ENCODE measurements at regions of chr2 and their contacts with region 1.

Region 1: GRCh38 chr2:233026192-233026813 is 6.2 kb upstream of the NEU2 start:
- DNase-seq: no peak
- ATAC-seq: peak; percentile 28; the same call in 1 of the 2 replicates
- H3K4me3 ChIP-seq: no peak overlapping the region
- H3K27ac ChIP-seq: no peak overlapping the region
- H3K4me1 ChIP-seq: peaks cover 10 to 40% of the 10 kb centered on the region in 2 experiments; a peak in 3 of 4 replicates
- H3K27me3 ChIP-seq: no peaks in the 10 kb centered on the region
- CTCF ChIP-seq: 0 out of 6 replicates have a peak, but pooled peaks of 1 of the 3 experiments have one; percentile 2
- POLR2A ChIP-seq: no peak
- RAD21 ChIP-seq: no peak

Region 2: DNA sequence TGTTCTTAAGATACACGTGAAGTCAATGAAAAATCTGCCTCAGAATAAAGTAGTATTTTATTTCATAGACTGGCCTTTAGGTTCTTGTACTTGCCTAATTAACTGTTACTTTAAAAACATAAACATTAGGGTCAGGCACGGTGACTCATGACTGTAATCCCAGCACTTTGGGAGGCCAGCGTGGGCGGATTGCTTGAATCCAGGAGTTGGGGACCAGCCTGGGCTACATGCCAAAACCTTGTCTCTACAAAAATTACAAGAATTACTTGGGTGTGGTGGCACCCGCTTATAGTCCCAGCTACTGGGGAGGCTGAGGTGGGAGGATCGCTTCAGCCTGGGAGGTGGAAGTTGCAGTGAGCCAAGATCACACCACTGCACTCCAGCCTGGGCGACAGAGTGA is 172.2 kb before region 1 on chr2:
- CTCF ChIA-PET with region 1: interaction called, 32 read pairs
- POLR2A ChIA-PET with region 1: no interaction called
- RAD21 ChIA-PET with region 1: interaction called in 1 of 2 experiments, 7 read pairs
- intact Hi-C with region 1: loop called (anchors 1 kb)
- DNase-seq: peak; percentile 78
- ATAC-seq: peak; percentile 58
- H3K4me3 ChIP-seq: peak overlapping the region in 1 of 2 experiments; percentile 41; a peak in 2 of 4 replicates
- H3K27ac ChIP-seq: peak overlapping the region; percentile 72; the same call in 1 of the 2 replicates
- H3K4me1 ChIP-seq: peaks cover 54 to 64% of the 10 kb centered on the region in 2 experiments
- H3K27me3 ChIP-seq: no peaks in the 10 kb centered on the region
- CTCF ChIP-seq: no peak
- POLR2A ChIP-seq: no peak
- RAD21 ChIP-seq: peak; percentile 28; the same call in 1 of the 2 replicates

Region 3: DNA sequence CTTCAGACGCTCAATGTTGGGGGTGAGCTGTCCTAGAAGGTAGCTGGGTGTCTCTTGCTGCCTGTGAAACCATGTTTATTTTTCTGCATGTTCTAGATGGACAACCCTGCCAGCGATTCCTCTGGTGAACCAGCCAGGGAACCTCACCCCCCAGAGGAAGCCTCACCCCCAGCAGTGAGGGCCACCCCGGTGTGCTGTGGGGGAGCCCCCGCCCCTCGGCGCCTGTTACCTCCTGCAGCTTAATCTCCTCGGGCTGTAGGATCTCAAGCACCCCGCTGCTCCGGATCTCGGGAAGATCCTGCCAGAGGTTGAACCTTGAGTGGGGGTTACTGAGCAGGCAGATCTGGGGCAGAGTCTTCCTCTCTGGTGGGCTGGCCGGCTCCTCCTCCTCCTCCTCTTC is 106.2 kb before region 1 on chr2:
- CTCF ChIA-PET with region 1: no interaction called
- POLR2A ChIA-PET with region 1: no interaction called
- RAD21 ChIA-PET with region 1: no interaction called
- intact Hi-C with region 1: no loop called
- DNase-seq: no peak
- ATAC-seq: no peak
- H3K4me3 ChIP-seq: no peak overlapping the region
- H3K27ac ChIP-seq: no peak overlapping the region
- H3K4me1 ChIP-seq: no peaks in the 10 kb centered on the region
- H3K27me3 ChIP-seq: no peaks in the 10 kb centered on the region
- CTCF ChIP-seq: no peak
- POLR2A ChIP-seq: no peak
- RAD21 ChIP-seq: no peak

Measured in HCT116 (cell line).